SK-N-SH (cell line): ENCODE measurements at regions of chr11 and their contacts with region 1.

Region 1: GRCh38 chr11:121655537-121656327 is 203.0 kb upstream of the SORL1-AS1 start:
- DNase-seq: peak; percentile 91
- H3K4me3 ChIP-seq: peak overlapping the region; percentile 48 to 71
- H3K27ac ChIP-seq: peak overlapping the region; percentile 100
- H3K4me1 ChIP-seq: peaks cover 18 to 36% of the 10 kb centered on the region in 2 experiments
- H3K27me3 ChIP-seq: no peaks in the 10 kb centered on the region
- CTCF ChIP-seq: peak; percentile 88
- EP300 ChIP-seq: peak; percentile 70 to 83; a peak in 2 of 4 replicates
- RAD21 ChIP-seq: peak; percentile 92

Region 2: GRCh38 chr11:121671283-121672168 is 15.8 kb after region 1 on chr11:
- CTCF ChIA-PET with region 1: interaction called, 13 read pairs
- POLR2A ChIA-PET with region 1: no interaction called
- DNase-seq: peak; percentile 65
- H3K4me3 ChIP-seq: no peak overlapping the region
- H3K27ac ChIP-seq: peak overlapping the region in 1 of 2 experiments; percentile 99; a peak in 2 of 4 replicates
- H3K4me1 ChIP-seq: peaks cover 13 to 47% of the 10 kb centered on the region in 2 experiments; a peak in 3 of 4 replicates
- H3K27me3 ChIP-seq: no peaks in the 10 kb centered on the region
- CTCF ChIP-seq: no peak
- EP300 ChIP-seq: peak in 1 of 2 experiments; percentile 60; a peak in 1 of 4 replicates
- RAD21 ChIP-seq: no peak

Region 3: GRCh38 chr11:121741761-121742361 is 86.1 kb after region 1 on chr11:
- CTCF ChIA-PET with region 1: interaction called, 16 read pairs
- POLR2A ChIA-PET with region 1: no interaction called
- DNase-seq: peak; percentile 36
- H3K4me3 ChIP-seq: peak overlapping the region in 1 of 2 experiments; percentile 9; a peak in 1 of 4 replicates
- H3K27ac ChIP-seq: peak overlapping the region; percentile 74 to 98
- H3K4me1 ChIP-seq: peaks cover 9 to 20% of the 10 kb centered on the region in 2 experiments; a peak in 3 of 4 replicates
- H3K27me3 ChIP-seq: no peaks in the 10 kb centered on the region
- CTCF ChIP-seq: no peak
- EP300 ChIP-seq: peak; percentile 80 to 89; a peak in 3 of 4 replicates
- RAD21 ChIP-seq: 0 out of 2 replicates have a peak, but pooled peaks have one; percentile 6

Region 4: GRCh38 chr11:122101625-122102291 is 446.0 kb after region 1 on chr11:
- CTCF ChIA-PET with region 1: interaction called, 134 read pairs
- POLR2A ChIA-PET with region 1: interaction called, 4 read pairs
- DNase-seq: peak; percentile 58
- H3K4me3 ChIP-seq: peak overlapping the region; percentile 77 to 80
- H3K27ac ChIP-seq: peak overlapping the region; percentile 94 to 98
- H3K4me1 ChIP-seq: peaks cover 9 to 37% of the 10 kb centered on the region in 2 experiments
- H3K27me3 ChIP-seq: no peaks in the 10 kb centered on the region
- CTCF ChIP-seq: peak; percentile 68
- EP300 ChIP-seq: peak in 1 of 2 experiments; percentile 14; a peak in 1 of 4 replicates
- RAD21 ChIP-seq: peak; percentile 82

Region 5: DNA sequence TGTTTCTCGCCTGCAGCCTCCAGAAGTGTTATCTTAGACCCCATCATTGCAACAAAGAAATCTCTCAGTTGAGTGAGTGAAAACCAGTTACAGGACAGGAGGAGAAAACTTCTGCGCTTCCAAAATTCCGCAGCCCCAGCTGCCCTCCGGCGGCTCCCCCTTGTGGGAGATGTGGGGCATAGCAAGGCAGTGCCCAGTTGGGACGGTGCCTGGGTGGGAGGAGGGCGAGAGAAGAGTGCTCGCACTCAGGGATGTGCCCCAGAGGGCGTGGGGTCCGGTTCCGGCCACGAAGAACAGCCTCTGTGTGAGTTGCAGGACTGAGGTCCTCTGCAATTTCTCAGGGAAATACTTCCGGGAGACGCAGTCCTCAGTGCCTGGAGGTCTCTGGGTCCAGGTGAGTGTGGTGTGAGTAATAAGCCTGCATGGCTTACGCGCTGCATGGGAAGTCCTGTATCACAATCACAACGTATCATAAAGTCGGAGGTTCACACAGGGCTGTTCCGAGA is 547.3 kb after region 1 on chr11:
- CTCF ChIA-PET with region 1: interaction called, 63 read pairs
- POLR2A ChIA-PET with region 1: no interaction called
- DNase-seq: peak; percentile 79
- H3K4me3 ChIP-seq: peak overlapping the region; percentile 47 to 67; a peak in 3 of 4 replicates
- H3K27ac ChIP-seq: peak overlapping the region; percentile 85 to 99
- H3K4me1 ChIP-seq: peaks cover 13 to 22% of the 10 kb centered on the region in 2 experiments
- H3K27me3 ChIP-seq: no peaks in the 10 kb centered on the region
- CTCF ChIP-seq: peak; percentile 98
- EP300 ChIP-seq: peak in 1 of 2 experiments; percentile 37; a peak in 1 of 4 replicates
- RAD21 ChIP-seq: peak; percentile 90

Region 6: DNA sequence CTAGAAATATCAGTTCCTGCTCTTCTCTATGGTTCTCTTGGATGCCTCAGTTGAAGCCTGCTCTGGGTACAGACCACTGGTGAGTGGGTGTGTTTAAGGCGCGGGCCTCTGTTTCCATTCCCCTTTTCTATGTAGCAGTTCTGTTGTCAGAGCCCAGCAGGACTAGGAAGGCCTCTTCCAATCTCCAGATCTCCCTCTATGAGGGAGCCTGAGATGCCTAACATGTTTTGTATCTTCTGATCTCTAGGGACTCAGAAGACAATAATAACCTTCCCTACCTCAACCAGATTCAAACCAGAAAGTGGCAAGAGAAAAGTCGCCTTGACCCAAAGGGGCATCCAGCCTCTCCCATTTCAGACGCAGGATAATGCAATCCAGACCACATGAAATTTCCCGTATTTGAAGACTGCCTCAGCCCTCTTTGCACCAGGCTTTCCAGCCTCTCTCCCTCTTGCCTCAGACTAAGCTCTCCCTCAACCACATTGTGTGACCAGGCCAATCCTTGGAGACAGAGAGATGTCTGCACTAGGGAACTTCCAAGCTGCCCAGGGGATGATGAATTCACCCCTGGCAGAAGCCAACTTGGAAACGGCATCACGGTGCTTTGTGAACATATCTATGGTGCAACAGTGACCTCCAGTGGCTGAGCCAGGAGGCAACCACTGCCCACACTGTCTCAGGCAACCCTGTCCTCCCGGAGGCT is 849.7 kb after region 1 on chr11:
- CTCF ChIA-PET with region 1: interaction called, 114 read pairs
- POLR2A ChIA-PET with region 1: interaction called, 4 read pairs
- DNase-seq: peak; percentile 82
- H3K4me3 ChIP-seq: no peak overlapping the region
- H3K27ac ChIP-seq: peak overlapping the region in 1 of 2 experiments; percentile 84; a peak in 3 of 4 replicates
- H3K4me1 ChIP-seq: peaks cover 0 to 6% of the 10 kb centered on the region in 2 experiments; a peak in 2 of 4 replicates
- H3K27me3 ChIP-seq: peaks cover 7% of the 10 kb centered on the region; the same call in 1 of the 2 replicates
- CTCF ChIP-seq: peak; percentile 89
- EP300 ChIP-seq: no peak
- RAD21 ChIP-seq: peak; percentile 98